Panc1 (cell line): ENCODE measurements at regions of chr6 and their contacts with region 1.

Region 1: DNA sequence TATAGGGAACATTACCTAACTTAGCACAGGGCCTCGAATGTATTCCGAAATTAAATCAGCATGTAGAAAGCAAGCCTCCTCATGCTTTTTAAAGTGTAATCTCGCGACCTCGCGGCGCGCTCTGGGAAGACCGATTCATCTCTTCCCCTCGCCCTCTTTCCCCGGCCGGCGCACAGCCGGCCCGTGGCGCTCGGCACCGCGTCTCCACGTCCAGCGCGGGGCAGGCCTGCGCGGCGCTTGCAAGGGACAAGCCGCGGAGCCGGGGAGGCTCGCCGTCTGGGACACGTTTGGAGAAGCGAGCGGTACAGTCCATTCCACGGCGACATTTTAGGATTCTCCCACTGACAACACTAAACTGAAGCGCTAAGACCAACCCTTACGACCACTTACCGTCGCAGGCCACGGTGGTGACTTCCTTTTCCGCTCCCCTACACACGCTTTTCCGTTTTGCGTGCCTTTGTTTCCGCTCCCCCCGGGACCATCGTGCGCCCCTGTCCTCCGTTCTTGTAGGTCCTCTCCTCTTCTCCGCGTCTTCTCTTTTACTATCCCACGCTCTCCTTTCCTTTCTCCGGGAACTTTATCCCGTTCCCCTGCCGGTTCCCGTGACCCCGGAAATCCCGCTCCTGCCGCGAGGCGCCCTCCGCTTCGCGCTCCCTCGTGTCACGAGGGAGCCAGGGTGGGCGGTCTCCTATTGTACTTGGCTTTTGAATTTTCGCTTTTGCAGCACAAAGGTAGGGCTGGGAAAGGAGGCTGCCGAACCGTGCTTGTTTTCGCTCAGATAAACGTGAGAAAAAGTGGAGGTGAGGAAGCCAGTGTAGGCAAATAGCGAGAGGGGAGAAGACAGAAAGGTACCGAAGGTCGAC is at the start of gene ECHDC1:
- DNase-seq: peak; percentile 61
- ATAC-seq: peak; percentile 91
- H3K4me3 ChIP-seq: peak within 1 kb of the TSS; percentile 60 to 97
- H3K27ac ChIP-seq: peak within 1 kb of the TSS; percentile 99
- H3K4me1 ChIP-seq: peaks cover 45% of the 10 kb centered on the region
- H3K27me3 ChIP-seq: no peaks in the 10 kb centered on the region
- CTCF ChIP-seq: no peak
- total RNA-seq, gene ECHDC1: 81.9 TPM

Region 2: DNA sequence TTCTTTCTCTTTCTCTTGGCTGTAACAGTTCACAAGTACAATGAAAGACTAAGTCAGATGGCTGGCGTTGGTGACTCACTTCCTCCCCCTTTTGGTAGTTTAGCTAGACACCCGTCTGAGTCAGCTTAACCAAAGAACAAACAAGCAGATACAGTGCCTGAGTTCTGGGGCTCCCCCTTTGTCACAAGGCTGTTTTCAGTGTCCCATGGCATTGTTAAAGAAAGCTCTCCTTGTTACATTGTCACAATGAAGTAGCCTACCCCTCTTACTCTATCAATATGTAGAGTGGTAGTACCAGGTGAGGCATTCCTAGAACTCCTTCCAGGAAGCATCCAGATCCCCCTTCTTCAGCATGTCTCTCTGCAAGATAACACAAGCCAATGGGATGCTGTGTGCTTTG is 77.4 kb after region 1 on chr6:
- CTCF ChIA-PET with region 1: no interaction called
- POLR2A ChIA-PET with region 1: no interaction called
- in situ Hi-C with region 1: no loop called
- intact Hi-C with region 1: loop called (anchors 5 kb)
- DNase-seq: peak; percentile 96
- ATAC-seq: peak; percentile 99
- H3K4me3 ChIP-seq: 0 out of 4 replicates have a peak overlapping the region, but pooled peaks of 1 of the 2 experiments have one; percentile 0
- H3K27ac ChIP-seq: peak overlapping the region; percentile 89
- H3K4me1 ChIP-seq: peaks cover 13% of the 10 kb centered on the region
- H3K27me3 ChIP-seq: no peaks in the 10 kb centered on the region
- CTCF ChIP-seq: peak; percentile 72

Region 3: DNA sequence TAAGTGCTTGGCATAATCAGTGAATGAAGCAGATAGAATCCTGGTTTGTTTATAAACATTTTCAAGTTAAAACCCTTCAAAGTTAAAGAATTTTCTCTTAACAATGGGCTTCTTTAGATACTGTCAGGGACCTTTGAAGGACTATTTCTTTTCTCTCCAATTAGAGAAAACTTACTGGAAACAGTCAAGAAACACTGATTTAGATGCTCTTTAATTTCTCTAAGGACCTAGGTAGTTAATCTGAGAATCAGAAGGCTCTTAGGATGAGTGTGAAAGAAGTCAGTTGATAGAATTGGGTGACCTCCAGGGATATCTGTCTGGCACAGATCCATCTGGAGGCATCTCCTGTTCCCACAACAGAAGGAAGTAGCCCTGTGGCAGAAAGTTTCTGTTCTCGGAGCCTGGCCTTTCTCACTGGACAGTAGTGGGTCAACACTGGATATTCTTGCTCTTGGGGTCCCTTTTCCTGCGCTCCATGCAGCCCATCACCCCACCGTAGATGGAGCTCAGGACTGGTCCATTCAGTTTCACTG is 93.5 kb after region 1 on chr6:
- CTCF ChIA-PET with region 1: no interaction called
- POLR2A ChIA-PET with region 1: no interaction called
- in situ Hi-C with region 1: loop called (anchors 5 kb)
- intact Hi-C with region 1: no loop called
- DNase-seq: no peak
- ATAC-seq: no peak
- H3K4me3 ChIP-seq: no peak overlapping the region
- H3K27ac ChIP-seq: no peak overlapping the region
- H3K4me1 ChIP-seq: no peaks in the 10 kb centered on the region
- H3K27me3 ChIP-seq: no peaks in the 10 kb centered on the region
- CTCF ChIP-seq: no peak